Activated CD4-positive, alpha-beta T cell treated with anti-CD3 and anti-CD28 coated beads for 36 hours (primary cell): ENCODE measurements at regions of chr9 and their contacts with region 1.

Region 1: DNA sequence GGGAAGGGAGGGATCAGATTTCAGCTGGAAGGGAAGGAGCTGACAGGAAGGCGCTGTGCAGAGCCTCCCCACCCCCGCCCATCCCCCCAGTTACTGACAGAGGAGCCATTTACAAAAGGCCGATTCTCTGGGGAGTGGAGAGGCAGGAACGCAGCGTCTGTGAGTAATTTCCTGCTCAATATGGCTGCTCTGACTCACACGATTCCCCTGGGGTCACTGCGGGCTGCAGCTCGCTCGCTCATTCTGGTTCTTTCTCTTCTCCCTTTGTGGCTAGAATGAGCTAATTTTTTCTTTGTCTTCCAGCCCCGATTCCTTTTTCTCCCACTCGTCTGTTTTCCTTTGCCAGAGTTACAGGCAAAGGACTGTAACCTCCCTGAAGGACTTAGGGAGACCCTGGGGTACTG is 28.8 kb downstream of the PTPA start:
- DNase-seq: peak; percentile 91
- ATAC-seq: peak; percentile 90
- H3K4me3 Mint-ChIP-seq: peak overlapping the region; percentile 83
- H3K27ac Mint-ChIP-seq: peak overlapping the region; percentile 99
- H3K4me1 Mint-ChIP-seq: peaks cover 37% of the 10 kb centered on the region
- H3K27me3 Mint-ChIP-seq: no peaks in the 10 kb centered on the region

Region 2: GRCh38 chr9:129125476-129125875 is 14.5 kb before region 1 on chr9:
- CTCF ChIA-PET with region 1: interaction called, 13 read pairs
- POLR2A ChIA-PET with region 1: no interaction called
- intact Hi-C with region 1: no loop called
- DNase-seq: no peak
- ATAC-seq: no peak
- H3K4me3 Mint-ChIP-seq: no peak overlapping the region
- H3K27ac Mint-ChIP-seq: no peak overlapping the region
- H3K4me1 Mint-ChIP-seq: no peaks in the 10 kb centered on the region
- H3K27me3 Mint-ChIP-seq: no peaks in the 10 kb centered on the region

Region 3: DNA sequence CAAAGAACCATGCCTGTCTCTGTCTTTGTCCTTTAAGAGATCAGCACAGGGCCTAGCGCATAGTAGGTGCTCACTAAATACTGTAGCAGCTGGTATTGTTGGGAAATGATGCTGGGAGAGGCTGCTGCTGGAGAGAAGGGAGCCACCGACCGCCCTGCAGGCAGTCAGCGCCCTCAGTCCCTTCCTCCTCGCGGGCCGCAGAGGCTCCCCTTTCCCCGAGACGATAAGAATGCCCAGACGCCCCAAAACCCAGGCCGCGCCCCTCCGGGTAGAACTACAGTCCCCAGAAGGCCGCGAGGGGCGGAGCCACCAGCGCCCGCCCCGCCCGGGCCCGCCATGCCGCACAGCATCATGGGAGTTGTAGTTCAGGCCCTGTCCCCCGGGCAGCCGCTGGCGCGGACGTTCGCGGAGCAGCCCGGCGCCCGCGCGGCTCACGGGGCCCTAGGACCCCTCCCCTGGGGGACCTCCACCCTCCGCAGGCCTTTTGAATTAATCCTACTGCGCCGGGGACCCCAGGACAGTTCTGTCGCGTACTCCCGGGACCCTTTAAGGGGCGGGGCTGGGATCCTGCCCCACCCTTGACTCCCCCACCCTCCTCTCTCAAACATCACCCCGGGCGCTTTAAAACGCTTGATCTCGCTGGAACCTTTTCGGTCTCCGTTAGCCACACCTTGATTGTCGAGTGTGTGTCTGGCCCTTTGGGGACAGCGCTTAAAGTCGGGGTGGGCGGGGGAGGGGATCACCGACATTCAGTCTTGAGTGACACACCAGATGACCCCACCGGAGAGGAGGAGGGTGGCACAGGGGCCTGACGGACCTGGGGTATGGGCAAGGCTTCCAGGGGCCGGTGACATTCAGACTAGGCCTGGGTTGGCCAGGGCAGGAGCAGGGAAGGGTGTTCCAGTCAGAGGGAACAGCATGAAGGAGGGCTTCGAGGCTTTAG is 62.9 kb after region 1 on chr9:
- CTCF ChIA-PET with region 1: no interaction called
- POLR2A ChIA-PET with region 1: no interaction called
- intact Hi-C with region 1: loop called in 1 of 2 experiments (anchors 1 kb)
- DNase-seq: peak; percentile 95
- ATAC-seq: peak; percentile 95
- H3K4me3 Mint-ChIP-seq: peak overlapping the region; percentile 57
- H3K27ac Mint-ChIP-seq: peak overlapping the region; percentile 31
- H3K4me1 Mint-ChIP-seq: peaks cover 18% of the 10 kb centered on the region
- H3K27me3 Mint-ChIP-seq: peaks cover 3% of the 10 kb centered on the region

Region 4: DNA sequence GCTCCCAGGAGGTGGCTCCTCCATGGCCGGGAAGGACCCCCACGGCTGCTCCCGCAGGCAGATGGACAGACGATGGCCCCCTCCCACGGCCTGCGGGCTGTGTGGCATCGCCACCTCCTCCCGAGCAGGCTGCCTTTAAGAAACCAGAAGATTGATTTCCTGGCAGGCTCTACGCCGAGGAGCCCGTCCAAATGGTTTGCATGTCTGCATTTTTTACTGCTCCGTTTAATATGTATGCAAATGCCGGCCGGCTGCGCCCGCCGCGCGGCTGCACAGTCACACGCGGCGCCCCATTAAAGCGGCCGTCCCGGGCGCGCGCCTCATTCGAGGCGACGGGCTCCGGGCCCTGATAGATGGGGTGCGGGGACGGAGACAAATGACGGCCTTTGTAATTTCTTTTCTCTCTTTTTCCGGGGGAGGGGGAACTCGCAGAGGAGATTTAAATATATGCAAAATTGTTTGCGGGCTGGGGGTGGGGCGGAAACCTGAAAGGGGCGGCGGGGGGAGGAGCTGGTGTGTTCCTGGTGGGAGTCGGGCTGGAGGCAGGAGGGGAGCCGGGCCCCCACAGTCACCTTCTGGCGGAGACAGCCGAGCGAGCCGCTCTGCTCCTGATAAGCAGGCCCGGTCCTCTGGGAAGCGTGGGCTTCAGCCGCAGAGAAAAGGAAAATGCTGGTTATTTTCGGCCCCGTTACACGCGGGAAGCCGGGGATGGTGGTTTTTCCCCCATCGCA is 196.8 kb after region 1 on chr9:
- CTCF ChIA-PET with region 1: interaction called, 4 read pairs
- POLR2A ChIA-PET with region 1: no interaction called
- intact Hi-C with region 1: loop called in 1 of 2 experiments (anchors 5 kb)
- DNase-seq: peak; percentile 59
- ATAC-seq: peak; percentile 58
- H3K4me3 Mint-ChIP-seq: peak overlapping the region; percentile 35
- H3K27ac Mint-ChIP-seq: no peak overlapping the region
- H3K4me1 Mint-ChIP-seq: peaks cover 33% of the 10 kb centered on the region
- H3K27me3 Mint-ChIP-seq: peaks cover 4% of the 10 kb centered on the region

Region 5: DNA sequence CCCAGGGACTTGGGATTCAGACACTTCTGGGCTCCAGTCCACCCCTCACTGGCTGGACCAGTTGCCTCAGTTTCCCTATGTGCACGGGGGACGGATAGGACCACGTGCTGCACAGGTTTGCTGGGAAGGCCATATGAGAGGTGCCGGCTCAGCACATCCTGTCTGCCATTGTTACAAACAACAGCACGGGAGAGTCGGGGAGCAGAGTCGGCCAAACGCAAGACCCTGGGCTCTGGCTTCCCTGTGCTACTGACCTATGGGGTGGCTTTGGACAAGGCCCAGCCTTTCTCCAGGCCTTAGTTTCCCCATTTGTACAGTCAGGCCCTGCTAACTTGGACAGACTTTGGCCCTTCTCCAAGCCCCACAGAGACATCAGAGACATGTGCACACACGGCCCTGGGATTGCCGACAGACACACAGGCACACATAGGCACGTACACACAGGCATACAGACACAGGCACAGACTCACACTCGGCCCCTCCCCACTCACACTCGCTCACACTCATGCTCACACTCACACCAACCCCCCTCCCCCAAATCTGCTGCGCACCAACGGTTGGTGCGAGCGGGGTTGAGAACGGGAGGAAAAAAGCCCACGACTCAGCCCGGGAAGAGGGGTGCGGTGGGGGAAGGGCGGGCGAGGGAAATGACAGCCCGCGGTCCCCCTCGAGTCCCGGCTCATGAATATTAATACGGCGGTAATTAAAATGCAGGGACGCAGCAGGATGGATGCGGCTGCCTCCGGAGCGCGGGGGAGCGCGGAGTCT is 347.8 kb after region 1 on chr9:
- CTCF ChIA-PET with region 1: interaction called, 3 read pairs
- POLR2A ChIA-PET with region 1: interaction called, 4 read pairs
- intact Hi-C with region 1: loop called in 1 of 2 experiments (anchors 1 kb)
- DNase-seq: peak; percentile 76
- ATAC-seq: peak; percentile 34
- H3K4me3 Mint-ChIP-seq: peak overlapping the region; percentile 93
- H3K27ac Mint-ChIP-seq: peak overlapping the region; percentile 96
- H3K4me1 Mint-ChIP-seq: peaks cover 66% of the 10 kb centered on the region
- H3K27me3 Mint-ChIP-seq: no peaks in the 10 kb centered on the region

Region 6: GRCh38 chr9:129641746-129642513 is 501.9 kb after region 1 on chr9 and contains the start of gene ASB6:
- CTCF ChIA-PET with region 1: no interaction called
- POLR2A ChIA-PET with region 1: no interaction called
- intact Hi-C with region 1: loop called in 1 of 2 experiments (anchors 1 kb)
- DNase-seq: peak; percentile 97
- ATAC-seq: peak; percentile 97
- H3K4me3 Mint-ChIP-seq: peak within 1 kb of the TSS; percentile 87
- H3K27ac Mint-ChIP-seq: peak within 1 kb of the TSS; percentile 73
- H3K4me1 Mint-ChIP-seq: peaks cover 18% of the 10 kb centered on the region
- H3K27me3 Mint-ChIP-seq: no peaks in the 10 kb centered on the region
- total RNA-seq, gene ASB6: 13.4 to 15.0 TPM